Posterior vena cava (tissue), 2 donors: ENCODE measurements at regions of chr15 and their contacts with region 1.

Region 1: GRCh38 chr15:74438721-74439316 is 5.1 kb upstream of the SEMA7A start:
- DNase-seq: peak; percentile 89

Region 2: DNA sequence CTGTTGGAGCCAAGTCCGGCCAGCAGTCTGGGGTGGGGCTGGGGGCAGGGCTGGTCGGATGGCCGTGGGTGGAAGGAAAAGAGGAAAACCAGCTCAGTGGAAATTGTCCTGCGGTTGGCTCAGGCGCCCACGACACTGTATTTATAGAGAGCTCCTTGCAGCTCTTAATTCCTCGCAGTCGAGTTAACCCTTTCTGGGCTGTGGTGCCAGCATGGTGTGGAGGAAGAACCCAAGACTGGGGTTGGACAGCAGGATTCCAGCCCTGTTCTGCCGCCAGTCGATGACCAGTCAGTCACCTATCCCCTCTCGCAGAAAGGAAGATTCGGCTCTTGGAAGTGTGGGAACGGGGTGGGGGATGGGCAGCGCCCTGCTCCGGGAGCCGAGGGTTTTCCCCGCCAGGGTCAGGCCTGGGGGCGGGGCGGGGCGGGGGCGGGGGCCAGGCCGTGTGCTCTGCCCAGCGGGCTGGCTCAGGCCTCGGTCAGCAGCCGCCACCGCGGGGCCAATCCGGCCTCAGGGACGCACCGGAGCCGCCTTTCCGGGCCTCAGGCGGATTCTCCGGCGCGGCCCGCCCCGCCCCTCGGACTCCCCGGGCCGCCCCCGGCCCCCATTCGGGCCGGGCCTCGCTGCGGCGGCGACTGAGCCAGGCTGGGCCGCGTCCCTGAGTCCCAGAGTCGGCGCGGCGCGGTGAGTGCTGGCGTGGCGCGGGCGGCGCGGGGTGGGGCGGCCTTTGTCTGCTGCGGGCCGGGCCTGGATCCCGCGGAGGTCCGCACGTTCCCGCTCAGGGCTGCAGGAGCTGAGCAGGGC is 754.8 kb before region 1 on chr15 and contains the start of gene CD276:
- intact Hi-C with region 1: loop called in 1 of 2 experiments (anchors 5 kb)
- DNase-seq: peak; percentile 93
- total RNA-seq, gene CD276: 84.1 to 137 TPM

Region 3: DNA sequence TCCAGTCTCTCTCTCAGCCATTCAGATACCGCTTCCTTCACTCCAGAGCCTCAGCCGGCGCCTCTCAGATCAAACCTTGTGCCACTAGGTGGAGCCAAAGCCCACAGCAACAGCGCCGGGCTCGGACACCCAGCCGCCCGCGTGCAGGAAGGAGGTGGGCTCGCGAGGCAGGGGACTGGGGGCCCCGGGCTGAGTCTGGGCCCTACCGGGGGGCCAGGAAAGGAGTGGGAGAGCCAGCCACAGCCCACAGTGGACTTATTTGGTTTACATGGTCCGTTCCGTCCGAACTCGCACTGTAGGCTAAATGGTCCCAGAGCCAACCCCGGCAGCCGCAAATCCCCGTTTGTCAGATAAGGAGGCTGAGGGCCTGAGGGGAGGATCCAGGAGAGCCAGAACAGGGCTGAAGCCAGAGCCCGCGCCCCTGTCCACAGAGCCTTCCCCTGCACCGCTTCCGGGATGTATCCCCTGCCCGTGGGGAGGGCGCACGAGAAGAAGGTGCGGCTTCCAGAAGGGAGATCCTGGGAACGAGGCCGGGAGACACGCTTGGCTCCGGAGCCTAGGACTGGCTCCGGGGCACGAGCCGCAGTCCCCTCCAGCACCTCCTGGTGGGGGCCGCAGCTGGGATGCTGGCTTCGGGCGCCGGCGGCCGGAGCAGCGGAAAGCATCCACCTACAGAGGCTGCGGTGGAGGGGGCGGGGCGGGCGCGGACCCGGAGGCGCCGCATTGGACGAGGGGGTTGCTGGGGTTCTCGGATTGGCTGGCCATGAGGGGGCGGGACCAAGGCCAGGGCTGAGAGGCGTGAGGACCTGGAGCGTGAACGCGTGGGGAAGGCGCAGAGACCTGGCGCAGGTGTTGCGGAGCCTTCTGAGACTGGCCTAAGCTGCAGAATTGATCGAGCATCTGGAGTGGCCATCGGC is 64.8 kb before region 1 on chr15:
- intact Hi-C with region 1: loop called (anchors 2 kb)
- DNase-seq: peak; percentile 97

Region 4: DNA sequence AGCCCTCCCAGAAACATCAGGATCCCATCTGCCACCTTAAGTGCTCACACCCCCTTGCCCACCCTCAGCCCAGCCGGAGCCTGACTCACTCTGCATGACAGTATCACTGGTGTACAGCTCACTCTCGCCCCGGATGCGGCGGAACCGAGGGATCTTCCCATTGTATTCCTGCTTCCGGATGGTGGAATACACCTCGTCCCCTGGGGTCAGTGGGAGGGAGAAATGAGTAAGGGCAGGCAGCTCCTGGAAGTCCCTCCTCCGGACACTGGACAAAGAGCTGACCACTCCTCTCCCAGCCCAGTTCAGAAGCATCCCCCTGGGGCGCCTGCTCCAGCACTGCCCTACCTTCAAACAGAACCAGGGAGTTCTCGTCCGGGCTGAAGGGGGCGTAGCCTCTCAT is 21.6 kb before region 1 on chr15:
- intact Hi-C with region 1: no loop called
- DNase-seq: no peak